ENCODE measurements at regions of chr11 and their contacts with region 1.

Region 1: GRCh38 chr11:46238967-46239800 is 38.3 kb upstream of the CREB3L1 start:
- DNase-seq: peak; percentile 78
- H3K4me3 Mint-ChIP-seq: peak overlapping the region; percentile 59
- H3K27ac Mint-ChIP-seq: no peak overlapping the region
- H3K4me1 Mint-ChIP-seq: peaks cover 36% of the 10 kb centered on the region
- H3K27me3 Mint-ChIP-seq: peaks cover 21% of the 10 kb centered on the region

Region 2: GRCh38 chr11:45846974-45847910 is 391.9 kb before region 1 on chr11 and contains the start of gene CRY2:
- intact Hi-C with region 1: loop called (anchors 5 kb)
- DNase-seq: peak; percentile 96
- H3K4me3 Mint-ChIP-seq: peak within 1 kb of the TSS; percentile 84
- H3K27ac Mint-ChIP-seq: peak within 1 kb of the TSS; percentile 87
- H3K4me1 Mint-ChIP-seq: peaks cover 47% of the 10 kb centered on the region
- H3K27me3 Mint-ChIP-seq: peaks cover 12% of the 10 kb centered on the region
- total RNA-seq, gene CRY2: 21.5 and 24.0 TPM in 2 replicates

Region 3: GRCh38 chr11:45917623-45918330 is 321.4 kb before region 1 on chr11 and contains the start of gene PEX16:
- intact Hi-C with region 1: loop called (anchors 1 kb)
- DNase-seq: peak; percentile 98
- H3K4me3 Mint-ChIP-seq: peak within 1 kb of the TSS; percentile 96
- H3K27ac Mint-ChIP-seq: peak within 1 kb of the TSS; percentile 98
- H3K4me1 Mint-ChIP-seq: peaks cover 22% of the 10 kb centered on the region
- H3K27me3 Mint-ChIP-seq: peaks cover 7% of the 10 kb centered on the region
- total RNA-seq, gene PEX16: 30.8 and 38.5 TPM in 2 replicates

Region 4: DNA sequence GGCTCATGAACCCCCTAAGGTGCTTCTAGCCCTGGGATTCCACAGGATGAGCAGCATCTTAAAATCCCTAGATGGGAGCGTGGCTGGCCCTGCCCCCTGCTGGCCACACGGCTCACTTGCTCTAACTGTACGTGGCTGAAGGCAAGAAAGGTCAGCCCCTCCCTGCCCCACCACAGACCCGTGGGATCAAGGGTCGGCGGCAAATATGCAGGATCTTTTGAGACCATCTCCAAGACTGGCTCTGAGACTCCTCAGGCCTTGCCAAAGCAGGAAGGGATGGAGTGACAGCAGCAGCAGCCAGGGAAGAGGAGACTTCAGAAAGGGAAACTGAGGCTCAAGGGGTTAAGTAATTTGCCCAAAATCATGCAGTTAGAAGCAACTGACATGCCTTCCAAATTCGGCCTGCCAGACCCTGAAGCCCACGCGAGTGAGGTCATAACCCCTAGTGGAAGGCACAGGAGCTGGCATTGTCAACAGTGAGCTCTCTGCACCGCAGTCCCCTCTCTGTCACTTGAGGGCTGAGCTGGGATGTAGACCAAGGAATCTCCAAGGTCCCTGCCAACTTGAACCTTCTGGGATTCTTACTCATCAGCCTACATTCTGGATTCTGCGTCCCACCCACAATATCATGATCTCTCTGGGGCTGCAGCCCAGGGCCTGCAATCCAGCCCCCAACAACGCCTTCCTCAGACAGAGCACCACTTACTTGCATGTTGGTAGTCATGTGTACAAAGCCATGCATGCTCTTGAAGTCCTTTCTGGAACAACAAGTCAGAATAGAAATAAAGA is 69.6 kb after region 1 on chr11:
- intact Hi-C with region 1: loop called (anchors 1 kb)
- DNase-seq: peak; percentile 43
- H3K4me3 Mint-ChIP-seq: no peak overlapping the region
- H3K27ac Mint-ChIP-seq: no peak overlapping the region
- H3K4me1 Mint-ChIP-seq: peaks cover 6% of the 10 kb centered on the region
- H3K27me3 Mint-ChIP-seq: peaks cover 1% of the 10 kb centered on the region

Region 5: GRCh38 chr11:46315033-46315738 is 76.0 kb after region 1 on chr11:
- intact Hi-C with region 1: loop called (anchors 2 kb)
- DNase-seq: peak; percentile 52
- H3K4me3 Mint-ChIP-seq: no peak overlapping the region
- H3K27ac Mint-ChIP-seq: no peak overlapping the region
- H3K4me1 Mint-ChIP-seq: peaks cover 15% of the 10 kb centered on the region
- H3K27me3 Mint-ChIP-seq: no peaks in the 10 kb centered on the region

Region 6: DNA sequence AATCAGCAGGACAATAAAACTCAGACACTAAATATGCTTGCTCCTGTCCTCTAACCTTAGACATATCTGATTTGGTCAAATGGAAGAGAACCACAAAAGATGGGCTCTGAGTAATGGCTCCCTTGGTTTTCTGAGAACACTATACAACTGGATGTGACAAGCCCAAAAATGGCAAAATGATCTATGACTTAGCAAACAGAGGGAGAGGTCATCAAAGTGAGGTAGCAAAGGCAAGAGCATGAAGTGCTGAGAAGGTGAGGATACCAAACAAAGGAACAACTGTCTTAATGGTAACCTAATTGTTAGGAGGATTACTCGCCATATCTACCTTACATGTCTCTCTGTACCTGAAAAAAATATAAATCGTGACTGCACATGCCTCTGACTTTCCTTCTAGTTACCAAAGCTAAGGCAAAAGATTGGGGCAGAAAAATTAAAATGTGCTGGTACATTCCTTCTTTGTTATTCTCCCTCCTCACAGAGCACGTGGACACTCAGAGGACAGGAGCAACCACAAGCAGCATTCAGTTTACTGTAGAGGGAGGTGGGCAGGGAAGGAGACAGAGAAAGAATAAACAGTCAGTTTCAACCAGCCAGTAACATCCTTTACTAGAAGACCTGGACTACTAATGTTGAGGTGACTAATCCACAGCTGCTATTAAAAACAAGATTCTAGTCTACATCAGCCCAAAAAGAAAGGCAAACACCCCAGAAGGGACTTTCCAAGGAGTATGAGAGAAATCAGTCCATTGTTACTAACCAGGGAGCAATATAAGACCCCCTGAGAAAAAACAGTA is 265.8 kb after region 1 on chr11:
- intact Hi-C with region 1: no loop called
- DNase-seq: no peak
- H3K4me3 Mint-ChIP-seq: no peak overlapping the region
- H3K27ac Mint-ChIP-seq: peak overlapping the region; percentile 65
- H3K4me1 Mint-ChIP-seq: peaks cover 21% of the 10 kb centered on the region
- H3K27me3 Mint-ChIP-seq: no peaks in the 10 kb centered on the region

Region 7: GRCh38 chr11:46529095-46529905 is 290.1 kb after region 1 on chr11:
- intact Hi-C with region 1: loop called (anchors 1 kb)
- DNase-seq: peak; percentile 57
- H3K4me3 Mint-ChIP-seq: no peak overlapping the region
- H3K27ac Mint-ChIP-seq: no peak overlapping the region
- H3K4me1 Mint-ChIP-seq: peaks cover 17% of the 10 kb centered on the region
- H3K27me3 Mint-ChIP-seq: no peaks in the 10 kb centered on the region

Region 8: GRCh38 chr11:46700241-46701077 is 461.3 kb after region 1 on chr11 and contains the starts of genes ARHGAP1 and ZNF408:
- intact Hi-C with region 1: loop called (anchors 5 kb)
- DNase-seq: peak; percentile 99
- H3K4me3 Mint-ChIP-seq: peak within 1 kb of the TSS; percentile 96
- H3K27ac Mint-ChIP-seq: peak within 1 kb of the TSS; percentile 92
- H3K4me1 Mint-ChIP-seq: peaks cover 28% of the 10 kb centered on the region
- H3K27me3 Mint-ChIP-seq: no peaks in the 10 kb centered on the region
- total RNA-seq, gene ARHGAP1: 58.8 and 66.8 TPM in 2 replicates
- total RNA-seq, gene ZNF408: 10.2 and 12.2 TPM in 2 replicates

Measured in activated T-helper 2 cell treated with anti-CD3 and anti-CD28 coated beads, Interferon-gamma antibody, Interleukin-2, Interleukin-4, amounts not matched to agents 10 μg/mL and 5 μg/mL and 100 μg/mL, durations not matched to agents 14 hours and 24 hours and 36 hours (primary cell).